Posterior vena cava (tissue), 2 donors: ENCODE measurements at regions of chr6 and their contacts with region 1.

Region 1: DNA sequence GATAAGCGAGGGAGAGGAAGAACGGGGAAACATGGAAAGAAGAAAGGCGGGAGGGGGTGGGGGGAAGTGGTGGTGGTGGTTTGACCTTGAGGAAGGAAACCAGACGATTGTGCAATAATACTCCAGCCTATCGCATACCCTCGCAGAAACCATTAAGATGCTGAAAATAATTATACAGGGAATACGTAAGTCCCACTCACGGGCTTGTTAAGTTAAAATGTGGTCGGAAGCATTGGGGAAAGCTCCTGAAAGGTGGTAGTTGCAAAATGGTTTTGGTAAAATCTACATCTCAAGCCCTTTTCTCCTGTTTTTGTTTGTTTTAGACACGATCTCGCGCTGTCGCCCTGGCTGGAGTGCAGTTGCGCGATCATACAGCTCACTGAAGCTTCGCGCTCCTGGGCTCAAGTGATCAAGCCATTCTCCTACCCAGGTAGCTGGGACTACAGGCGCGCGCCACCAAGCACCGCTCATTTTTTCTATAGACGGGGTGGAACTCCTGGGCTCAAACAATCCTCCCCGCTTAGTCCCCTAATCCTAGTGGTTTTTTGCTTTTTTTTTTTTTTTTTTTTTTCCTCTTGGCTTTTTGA is 128.9 kb upstream of the ZNF184 start:
- DNase-seq: no peak

Region 2: DNA sequence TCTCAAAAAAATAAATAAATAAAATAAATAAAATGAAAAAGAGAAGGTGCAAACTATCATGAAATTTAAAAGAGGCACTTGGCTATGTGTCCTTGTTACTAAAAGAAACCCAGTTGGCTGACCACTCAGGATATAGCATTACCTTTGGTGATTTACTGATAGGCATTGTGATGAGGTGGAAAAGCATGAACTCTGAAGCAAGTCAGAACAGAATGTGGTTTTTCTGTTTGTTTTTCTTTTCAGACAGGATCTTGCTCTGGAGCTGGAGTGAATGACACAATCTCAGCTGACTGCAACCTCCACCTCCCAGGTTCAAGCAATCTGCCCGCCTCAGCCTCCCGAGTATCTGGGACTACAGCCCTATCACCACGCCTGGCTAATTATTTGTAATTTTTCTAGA is 160.8 kb before region 1 on chr6:
- intact Hi-C with region 1: no loop called
- DNase-seq: no peak

Region 3: GRCh38 chr6:27575594-27576361 is 26.0 kb before region 1 on chr6:
- intact Hi-C with region 1: loop called in 1 of 2 experiments (anchors 2 kb)
- DNase-seq: no peak